ENCODE measurements at regions of chr13 and their contacts with region 1.

Region 1: GRCh38 chr13:94620286-94620896 is 18.7 kb downstream of the GPR180 start:
- DNase-seq: no peak
- H3K4me3 ChIP-seq: no peak overlapping the region
- H3K27ac ChIP-seq: no peak overlapping the region
- H3K4me1 ChIP-seq: no peaks in the 10 kb centered on the region
- H3K27me3 ChIP-seq: no peaks in the 10 kb centered on the region
- CTCF ChIP-seq: peak in 1 of 4 experiments; percentile 13
- POLR2A ChIP-seq: no peak

Region 2: GRCh38 chr13:94435604-94436226 is 184.7 kb before region 1 on chr13:
- intact Hi-C with region 1: loop called (anchors 10 kb)
- DNase-seq: no peak
- H3K4me3 ChIP-seq: no peak overlapping the region
- H3K27ac ChIP-seq: no peak overlapping the region
- H3K4me1 ChIP-seq: no peaks in the 10 kb centered on the region
- H3K27me3 ChIP-seq: no peaks in the 10 kb centered on the region
- CTCF ChIP-seq: peak; percentile 47 to 61 (median 57)
- POLR2A ChIP-seq: no peak